ENCODE measurements at regions of chr7 and their contacts with region 1.

Region 1: DNA sequence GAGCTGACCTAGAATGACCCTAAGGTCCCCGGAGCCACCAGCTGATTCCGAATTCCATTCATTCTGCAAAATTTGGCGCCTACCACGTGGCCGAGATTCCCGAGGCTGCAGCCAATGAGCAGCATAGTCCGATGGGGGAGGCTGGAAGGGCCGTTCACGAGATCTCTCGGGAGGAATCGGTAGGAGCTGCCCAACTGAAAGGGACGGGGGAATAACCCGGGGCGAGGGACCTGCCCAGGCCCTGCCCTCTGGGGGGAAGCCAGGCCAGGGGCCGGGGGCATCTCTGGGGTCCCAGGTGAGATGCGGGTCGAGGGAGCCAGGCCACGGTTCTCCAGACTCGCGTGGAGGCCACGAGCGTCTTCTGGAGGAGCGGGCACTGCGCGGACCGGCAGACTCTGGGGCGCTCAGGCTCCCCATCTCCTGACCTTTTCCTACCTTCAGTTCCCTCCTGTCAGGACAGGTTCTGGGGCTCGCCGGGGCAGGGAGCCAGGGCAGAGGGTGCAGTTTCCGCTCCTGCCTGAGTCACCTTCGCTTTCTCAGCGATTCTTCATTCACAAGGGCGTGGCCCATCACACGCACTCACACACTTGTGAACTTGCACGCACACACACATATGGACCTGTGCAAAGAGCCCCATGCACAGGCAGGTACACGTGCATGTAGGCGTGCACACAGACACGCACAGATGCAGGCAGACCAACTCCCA is 173.4 kb downstream of the RNF216 start:
- DNase-seq: no peak
- ATAC-seq: no peak
- H3K4me3 Mint-ChIP-seq: no peak overlapping the region
- H3K27ac Mint-ChIP-seq: no peak overlapping the region
- H3K4me1 Mint-ChIP-seq: peaks cover 7% of the 10 kb centered on the region
- H3K27me3 Mint-ChIP-seq: no peaks in the 10 kb centered on the region

Region 2: GRCh38 chr7:5491251-5492019 is 116.7 kb before region 1 on chr7:
- POLR2A ChIA-PET with region 1: no interaction called
- DNase-seq: no peak
- ATAC-seq: no peak
- H3K4me3 Mint-ChIP-seq: no peak overlapping the region
- H3K27ac Mint-ChIP-seq: no peak overlapping the region
- H3K4me1 Mint-ChIP-seq: peaks cover 34% of the 10 kb centered on the region
- H3K27me3 Mint-ChIP-seq: no peaks in the 10 kb centered on the region

Region 3: GRCh38 chr7:5596046-5596895 is 11.8 kb before region 1 on chr7:
- POLR2A ChIA-PET with region 1: interaction called, 15 read pairs
- DNase-seq: peak; percentile 72
- ATAC-seq: peak; percentile 76
- H3K4me3 Mint-ChIP-seq: peak overlapping the region; percentile 86
- H3K27ac Mint-ChIP-seq: peak overlapping the region; percentile 82
- H3K4me1 Mint-ChIP-seq: peaks cover 18% of the 10 kb centered on the region
- H3K27me3 Mint-ChIP-seq: peaks cover 14% of the 10 kb centered on the region

Region 4: GRCh38 chr7:5622746-5623145 is 14.6 kb after region 1 on chr7:
- POLR2A ChIA-PET with region 1: no interaction called
- DNase-seq: no peak
- ATAC-seq: no peak
- H3K4me3 Mint-ChIP-seq: no peak overlapping the region
- H3K27ac Mint-ChIP-seq: no peak overlapping the region
- H3K4me1 Mint-ChIP-seq: peaks cover 3% of the 10 kb centered on the region
- H3K27me3 Mint-ChIP-seq: no peaks in the 10 kb centered on the region

Measured in activated naive CD8-positive, alpha-beta T cell treated with anti-CD3 and anti-CD28 coated beads, Interleukin-2, amount 10 ng/mL, durations not matched to agents 7 days and 5 days (primary cell).